Vagina (tissue), 2 donors: ENCODE measurements at regions of chr1 and their contacts with region 1.

Region 1: GRCh38 chr1:27662707-27663393 is 9.1 kb downstream of the IFI6 start:
- DNase-seq: no peak
- H3K4me3 ChIP-seq: no peak overlapping the region
- H3K27ac ChIP-seq: peak overlapping the region; percentile 30
- H3K4me1 ChIP-seq: peaks cover 19% of the 10 kb centered on the region
- H3K27me3 ChIP-seq: no peaks in the 10 kb centered on the region
- CTCF ChIP-seq: peak; percentile 87 to 99 (median 95)
- POLR2A ChIP-seq: no peak

Region 2: DNA sequence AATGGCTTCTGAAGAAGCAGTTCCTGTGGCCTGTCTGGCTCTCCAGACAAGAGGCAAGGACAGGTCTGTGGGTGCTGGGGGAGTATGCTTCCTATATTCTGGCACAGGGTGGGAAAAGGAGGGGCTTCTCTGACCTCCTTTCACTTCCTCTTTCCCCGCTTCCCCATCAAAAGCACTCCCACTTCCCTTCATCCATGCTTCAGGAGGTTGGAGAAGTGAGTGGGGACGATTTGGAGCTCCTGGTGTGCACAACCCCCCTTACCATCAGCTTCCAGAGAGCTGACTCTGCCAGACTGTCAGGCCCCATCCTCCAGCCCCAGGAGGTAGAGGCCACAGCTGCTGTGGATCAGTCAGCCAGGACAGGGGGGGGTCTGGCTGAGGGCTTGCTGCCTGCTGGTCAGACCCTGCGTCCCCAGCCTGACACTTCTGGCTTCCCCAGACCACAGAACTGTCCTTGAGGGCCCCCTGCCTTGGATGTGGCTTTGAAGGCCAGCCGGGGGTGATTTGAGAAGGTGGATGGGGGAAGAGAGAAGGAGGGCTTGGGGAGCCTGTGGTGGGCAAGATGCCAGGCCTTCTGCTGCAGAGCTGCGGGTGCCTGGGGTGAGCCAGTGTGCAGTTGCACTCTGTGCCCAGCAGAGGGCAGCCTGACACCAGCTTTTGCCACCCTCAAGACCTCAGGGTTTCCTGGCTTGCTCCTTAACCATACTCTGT is 362.4 kb before region 1 on chr1:
- intact Hi-C with region 1: loop called (anchors 10 kb)
- DNase-seq: peak in 1 of 2 donors; percentile 93
- H3K4me3 ChIP-seq: no peak overlapping the region
- H3K27ac ChIP-seq: peak overlapping the region; percentile 90
- H3K4me1 ChIP-seq: peaks cover 41% of the 10 kb centered on the region
- H3K27me3 ChIP-seq: no peaks in the 10 kb centered on the region
- CTCF ChIP-seq: peak; percentile 95 to 99 (median 99)
- POLR2A ChIP-seq: no peak

Region 3: DNA sequence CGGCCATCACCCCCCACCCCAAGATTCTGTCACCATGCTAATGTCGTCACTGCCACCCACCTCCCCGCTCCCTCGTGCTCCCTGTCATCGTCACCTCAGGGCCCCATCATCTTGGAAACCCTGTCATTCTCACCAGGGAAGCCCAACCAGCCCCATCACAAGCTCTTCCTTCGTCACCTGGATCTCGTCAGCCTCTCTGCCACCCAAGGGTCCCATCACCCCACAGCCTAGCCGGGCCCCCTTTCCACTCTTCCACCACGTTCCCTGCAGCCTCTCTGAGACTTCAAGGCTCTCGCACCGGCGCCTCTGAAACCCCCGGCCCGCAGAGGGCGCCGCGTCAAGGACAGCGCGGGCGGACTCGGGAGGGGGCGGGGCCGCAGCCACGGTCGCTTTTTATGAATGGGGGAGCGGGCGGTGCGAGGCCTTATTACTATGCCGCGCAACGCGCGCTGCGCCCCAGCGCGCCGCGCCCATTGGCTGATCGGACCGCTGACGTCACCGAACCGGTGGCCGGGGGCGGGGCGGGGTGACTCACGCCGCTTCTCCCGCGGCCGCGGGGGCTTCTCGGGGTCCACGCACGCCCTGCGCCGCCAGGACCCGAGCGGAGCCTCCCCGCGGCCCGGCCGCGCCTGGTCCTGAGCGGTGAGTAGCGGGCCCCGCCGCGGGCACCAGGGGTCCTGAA is 270.6 kb before region 1 on chr1 and contains the start of gene GPR3:
- intact Hi-C with region 1: loop called (anchors 10 kb)
- DNase-seq: no peak
- H3K4me3 ChIP-seq: peak within 1 kb of the TSS; percentile 46 to 59
- H3K27ac ChIP-seq: peak within 1 kb of the TSS; percentile 78
- H3K4me1 ChIP-seq: peaks cover 19% of the 10 kb centered on the region
- H3K27me3 ChIP-seq: no peaks in the 10 kb centered on the region
- CTCF ChIP-seq: peak; percentile 43 to 65 (median 51)
- POLR2A ChIP-seq: no peak
- total RNA-seq, gene GPR3: 0.74 TPM

Region 4: DNA sequence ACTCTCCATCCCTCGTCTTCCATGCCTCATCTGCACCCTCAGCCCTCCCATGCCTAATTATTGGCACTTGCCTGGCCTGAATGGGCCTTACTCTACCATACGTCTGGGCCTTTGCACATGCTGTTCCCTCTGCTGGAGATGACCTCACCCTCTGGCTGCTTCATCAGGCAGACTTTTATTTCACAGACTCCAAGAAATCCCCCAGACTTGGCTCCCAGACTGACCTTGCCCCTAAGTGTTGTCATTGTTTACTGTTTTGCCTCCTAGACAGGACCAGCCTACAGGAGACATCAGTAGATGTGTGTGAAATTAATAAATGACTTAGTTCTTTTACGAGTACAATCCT is 53.7 kb before region 1 on chr1:
- intact Hi-C with region 1: loop called (anchors 2 kb)
- DNase-seq: no peak
- H3K4me3 ChIP-seq: no peak overlapping the region
- H3K27ac ChIP-seq: no peak overlapping the region
- H3K4me1 ChIP-seq: peaks cover 32% of the 10 kb centered on the region
- H3K27me3 ChIP-seq: no peaks in the 10 kb centered on the region
- CTCF ChIP-seq: no peak
- POLR2A ChIP-seq: no peak